Activated CD4-positive, alpha-beta T cell treated with anti-CD3 and anti-CD28 coated beads for 36 hours (primary cell): ENCODE measurements at regions of chr1 and their contacts with region 1.

Region 1: DNA sequence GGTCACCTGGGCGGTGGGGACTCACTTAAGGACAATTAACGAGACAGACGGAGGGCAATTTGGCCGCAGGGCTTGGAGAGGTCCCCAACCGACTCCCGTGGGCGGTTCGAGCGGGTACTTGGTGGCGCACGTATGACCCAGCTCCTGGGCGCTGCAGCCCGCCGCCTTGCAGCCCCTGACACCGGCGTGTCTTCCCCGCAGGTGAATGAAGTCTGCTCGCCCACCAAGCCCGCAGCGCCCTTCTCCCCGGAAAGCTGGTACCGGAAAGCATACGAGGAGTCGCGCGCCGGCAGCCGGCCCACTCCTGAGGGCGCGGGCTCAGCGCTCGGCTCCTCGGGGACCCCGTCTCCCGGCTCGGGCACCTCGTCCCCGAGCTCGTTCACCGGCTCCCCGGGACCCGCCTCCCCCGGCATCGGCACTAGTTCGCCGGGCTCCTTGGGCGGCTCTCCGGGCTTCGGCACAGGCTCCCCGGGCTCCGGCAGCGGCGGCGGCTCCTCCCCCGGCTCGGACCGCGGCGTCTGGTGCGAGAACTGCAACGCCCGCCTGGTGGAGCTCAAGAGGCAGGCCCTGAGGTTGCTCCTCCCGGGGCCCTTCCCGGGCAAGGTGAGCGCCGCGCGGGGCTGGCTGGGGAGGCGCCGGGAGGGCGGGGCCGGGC is 1.4 kb downstream of the KIF26B start:
- DNase-seq: peak; percentile 94
- ATAC-seq: peak; percentile 93
- H3K4me3 Mint-ChIP-seq: peak overlapping the region; percentile 65
- H3K27ac Mint-ChIP-seq: no peak overlapping the region
- H3K4me1 Mint-ChIP-seq: peaks cover 25% of the 10 kb centered on the region
- H3K27me3 Mint-ChIP-seq: peaks cover 59% of the 10 kb centered on the region

Region 2: DNA sequence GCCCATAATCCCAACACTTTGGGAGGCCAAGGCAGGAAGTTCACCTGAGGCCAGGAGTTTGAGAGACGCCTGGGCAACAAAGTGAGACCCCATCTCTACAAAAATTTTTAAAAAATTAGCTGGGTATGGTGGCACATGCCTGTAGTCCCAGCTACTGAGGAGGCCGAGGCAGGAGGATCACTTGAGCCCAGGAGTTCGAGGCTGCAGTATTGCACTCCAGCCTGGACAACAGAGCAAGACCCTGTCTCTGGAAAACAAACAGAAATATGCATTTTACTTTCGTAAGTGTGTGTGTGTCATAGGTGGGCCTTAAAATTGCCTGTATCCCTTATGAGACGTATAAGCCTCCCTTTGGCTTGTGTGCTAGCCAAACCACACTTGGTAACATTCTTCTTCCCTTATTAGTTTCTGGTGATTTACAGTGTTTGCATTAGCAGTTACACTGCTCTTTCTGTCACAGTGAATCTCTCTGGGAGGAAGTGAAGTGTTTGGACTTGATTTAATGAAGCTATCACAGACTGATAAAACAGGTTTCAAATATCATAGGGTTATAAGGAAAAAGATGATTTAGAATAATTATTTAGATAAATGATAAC is 50.3 kb before region 1 on chr1:
- CTCF ChIA-PET with region 1: no interaction called
- POLR2A ChIA-PET with region 1: no interaction called
- intact Hi-C with region 1: no loop called
- DNase-seq: no peak
- ATAC-seq: no peak
- H3K4me3 Mint-ChIP-seq: no peak overlapping the region
- H3K27ac Mint-ChIP-seq: no peak overlapping the region
- H3K4me1 Mint-ChIP-seq: no peaks in the 10 kb centered on the region
- H3K27me3 Mint-ChIP-seq: no peaks in the 10 kb centered on the region

Region 3: GRCh38 chr1:245166471-245166885 is 10.3 kb after region 1 on chr1:
- CTCF ChIA-PET with region 1: interaction called, 11 read pairs
- POLR2A ChIA-PET with region 1: no interaction called
- intact Hi-C with region 1: no loop called
- DNase-seq: no peak
- ATAC-seq: no peak
- H3K4me3 Mint-ChIP-seq: no peak overlapping the region
- H3K27ac Mint-ChIP-seq: no peak overlapping the region
- H3K4me1 Mint-ChIP-seq: peaks cover 3% of the 10 kb centered on the region
- H3K27me3 Mint-ChIP-seq: peaks cover 45% of the 10 kb centered on the region

Region 4: DNA sequence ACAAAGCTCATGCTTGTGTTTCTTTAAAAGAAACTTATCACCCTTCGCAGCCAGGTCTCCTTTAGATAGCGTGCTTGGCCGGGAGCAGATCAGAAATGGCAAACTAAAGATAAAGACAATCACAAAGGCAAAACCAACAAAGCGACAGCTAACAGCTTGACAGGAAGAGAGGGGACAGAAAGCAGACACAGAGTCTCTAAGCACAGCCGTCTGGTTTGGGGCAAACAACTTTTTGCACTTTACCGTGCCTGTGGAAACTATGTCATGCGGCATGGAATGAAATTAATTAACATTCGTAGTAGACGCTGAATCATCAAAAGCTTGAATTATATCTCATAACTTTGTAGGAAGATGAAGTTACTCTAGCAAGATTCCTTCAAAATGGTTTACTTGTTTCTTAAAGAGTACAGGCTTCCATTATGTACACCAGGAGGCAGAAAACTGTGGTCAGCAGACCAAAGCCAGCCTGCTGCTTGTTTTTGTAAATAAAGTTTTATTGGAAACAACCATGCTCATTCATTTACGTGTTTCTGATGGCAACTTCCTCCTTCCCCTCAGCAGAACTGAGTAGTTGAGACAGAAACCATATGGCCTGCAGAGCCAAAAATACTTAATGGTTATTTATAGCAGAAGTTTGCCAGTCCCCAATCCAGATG is 181.7 kb after region 1 on chr1:
- CTCF ChIA-PET with region 1: no interaction called
- POLR2A ChIA-PET with region 1: no interaction called
- intact Hi-C with region 1: loop called in 1 of 2 experiments (anchors 10 kb)
- DNase-seq: no peak
- ATAC-seq: peak; percentile 60
- H3K4me3 Mint-ChIP-seq: no peak overlapping the region
- H3K27ac Mint-ChIP-seq: no peak overlapping the region
- H3K4me1 Mint-ChIP-seq: peaks cover 16% of the 10 kb centered on the region
- H3K27me3 Mint-ChIP-seq: peaks cover 15% of the 10 kb centered on the region

Region 5: DNA sequence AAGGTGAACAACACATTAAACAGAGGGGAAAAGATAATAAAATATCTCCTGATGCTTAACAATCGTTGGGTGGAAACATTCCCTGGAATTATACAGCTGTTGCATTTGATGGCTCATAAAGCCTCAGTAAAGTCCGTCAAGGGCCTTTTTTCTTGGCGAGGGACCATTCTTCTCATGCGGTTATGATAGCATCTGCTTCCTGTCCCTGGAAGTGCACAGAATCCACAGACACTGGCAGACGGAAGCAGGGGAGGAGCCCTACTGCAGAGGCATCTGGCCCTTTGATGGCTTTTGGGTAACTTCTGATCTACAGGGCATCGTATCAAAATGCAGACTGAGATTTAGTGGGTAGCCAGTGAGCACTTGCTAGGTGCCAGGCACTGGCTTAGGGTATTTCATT is 285.5 kb after region 1 on chr1:
- CTCF ChIA-PET with region 1: no interaction called
- POLR2A ChIA-PET with region 1: no interaction called
- intact Hi-C with region 1: loop called in 1 of 2 experiments (anchors 10 kb)
- DNase-seq: no peak
- ATAC-seq: no peak
- H3K4me3 Mint-ChIP-seq: no peak overlapping the region
- H3K27ac Mint-ChIP-seq: no peak overlapping the region
- H3K4me1 Mint-ChIP-seq: no peaks in the 10 kb centered on the region
- H3K27me3 Mint-ChIP-seq: peaks cover 23% of the 10 kb centered on the region

Region 6: DNA sequence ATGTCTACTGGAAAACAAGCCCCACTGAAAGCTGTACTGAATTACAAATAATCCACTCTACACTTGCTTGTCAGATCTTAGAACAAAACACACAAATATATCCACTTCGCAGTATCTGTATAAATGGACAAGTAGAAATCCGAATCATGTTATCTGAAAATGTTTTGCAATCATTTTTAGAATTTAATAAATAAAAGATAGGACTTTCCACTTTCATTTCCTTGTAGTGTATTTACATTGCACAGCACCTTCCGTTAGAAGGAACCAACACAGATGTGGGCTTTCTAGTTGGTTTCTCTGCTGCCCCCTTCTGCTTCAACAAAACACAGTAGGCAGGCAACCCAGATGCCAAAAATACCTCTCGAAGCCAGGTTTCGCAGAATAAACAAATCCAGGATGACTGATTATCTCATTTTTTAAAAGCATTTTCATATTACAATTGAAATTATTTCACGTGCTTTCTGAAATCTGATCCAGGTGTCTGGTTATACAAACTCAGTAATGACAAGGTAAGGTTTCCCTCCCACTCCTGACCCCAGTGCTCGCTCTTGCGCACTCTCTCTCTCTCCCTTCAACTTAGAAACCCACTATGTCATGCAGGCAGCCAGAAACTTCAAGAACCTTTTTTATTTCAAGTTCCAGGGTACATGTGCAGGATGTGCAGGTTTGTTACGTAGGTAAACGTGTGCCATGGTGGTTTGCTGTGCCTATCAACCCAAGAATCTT is 961.0 kb after region 1 on chr1:
- CTCF ChIA-PET with region 1: no interaction called
- POLR2A ChIA-PET with region 1: no interaction called
- intact Hi-C with region 1: loop called in 1 of 2 experiments (anchors 1 kb)
- DNase-seq: peak; percentile 34
- ATAC-seq: peak; percentile 86
- H3K4me3 Mint-ChIP-seq: peak overlapping the region; percentile 5
- H3K27ac Mint-ChIP-seq: peak overlapping the region; percentile 35
- H3K4me1 Mint-ChIP-seq: peaks cover 19% of the 10 kb centered on the region
- H3K27me3 Mint-ChIP-seq: no peaks in the 10 kb centered on the region

Region 7: DNA sequence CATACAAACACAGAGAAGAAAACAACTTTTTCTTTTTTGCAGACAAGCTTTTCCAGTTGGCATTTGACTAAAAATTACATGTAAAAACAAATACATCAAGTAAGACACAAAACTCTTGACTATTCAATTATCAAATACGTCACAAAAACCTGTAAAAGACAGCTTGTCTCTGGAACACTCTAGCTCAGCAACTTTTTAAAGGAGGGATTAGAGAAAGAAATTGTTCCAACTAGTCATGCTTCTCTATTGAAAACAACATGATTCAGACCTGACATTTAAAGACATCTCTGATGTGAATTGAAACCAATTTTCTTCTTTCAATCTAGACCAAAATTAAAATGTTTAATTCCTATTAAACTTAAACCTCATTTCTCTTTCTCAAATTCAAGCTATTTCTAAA is 1320.6 kb after region 1 on chr1:
- CTCF ChIA-PET with region 1: no interaction called
- POLR2A ChIA-PET with region 1: no interaction called
- intact Hi-C with region 1: loop called in 1 of 2 experiments (anchors 5 kb)
- DNase-seq: no peak
- ATAC-seq: peak; percentile 90
- H3K4me3 Mint-ChIP-seq: no peak overlapping the region
- H3K27ac Mint-ChIP-seq: no peak overlapping the region
- H3K4me1 Mint-ChIP-seq: peaks cover 23% of the 10 kb centered on the region
- H3K27me3 Mint-ChIP-seq: no peaks in the 10 kb centered on the region

Region 8: DNA sequence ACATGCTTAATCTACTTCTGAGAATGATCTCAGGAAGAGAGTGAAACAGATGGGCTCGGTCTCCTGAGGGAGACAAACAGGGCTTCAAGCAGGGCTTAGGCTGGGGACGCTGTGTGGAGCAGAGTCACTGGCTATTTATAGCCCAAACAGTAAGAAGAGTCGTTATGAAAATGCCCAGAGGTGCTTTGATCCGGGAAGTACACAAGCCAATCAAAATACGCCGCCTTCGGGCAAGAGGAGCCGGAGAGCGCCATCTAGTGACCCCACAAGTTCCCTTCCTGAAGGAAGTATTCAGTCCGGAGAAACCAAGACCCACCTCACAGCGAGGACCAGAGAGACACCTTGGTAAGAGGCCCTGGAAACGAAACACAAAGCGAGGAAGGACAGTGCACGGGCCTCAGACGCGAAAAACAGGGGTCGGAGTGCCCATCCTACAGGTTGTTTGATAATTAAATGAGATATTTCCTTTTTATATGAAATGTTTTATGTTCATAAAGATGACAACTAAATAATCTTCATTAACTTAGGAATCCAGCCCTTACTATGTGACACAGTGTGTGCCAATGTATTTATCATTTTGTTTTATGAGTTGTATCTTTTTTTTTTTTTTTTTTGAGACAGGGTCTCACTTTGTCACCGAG is 1543.0 kb after region 1 on chr1:
- CTCF ChIA-PET with region 1: no interaction called
- POLR2A ChIA-PET with region 1: no interaction called
- intact Hi-C with region 1: loop called in 1 of 2 experiments (anchors 1 kb)
- DNase-seq: peak; percentile 92
- ATAC-seq: peak; percentile 99
- H3K4me3 Mint-ChIP-seq: peak overlapping the region; percentile 1
- H3K27ac Mint-ChIP-seq: peak overlapping the region; percentile 48
- H3K4me1 Mint-ChIP-seq: peaks cover 5% of the 10 kb centered on the region
- H3K27me3 Mint-ChIP-seq: no peaks in the 10 kb centered on the region